ENCODE measurements at regions of chr1 and their contacts with region 1.

Region 1: DNA sequence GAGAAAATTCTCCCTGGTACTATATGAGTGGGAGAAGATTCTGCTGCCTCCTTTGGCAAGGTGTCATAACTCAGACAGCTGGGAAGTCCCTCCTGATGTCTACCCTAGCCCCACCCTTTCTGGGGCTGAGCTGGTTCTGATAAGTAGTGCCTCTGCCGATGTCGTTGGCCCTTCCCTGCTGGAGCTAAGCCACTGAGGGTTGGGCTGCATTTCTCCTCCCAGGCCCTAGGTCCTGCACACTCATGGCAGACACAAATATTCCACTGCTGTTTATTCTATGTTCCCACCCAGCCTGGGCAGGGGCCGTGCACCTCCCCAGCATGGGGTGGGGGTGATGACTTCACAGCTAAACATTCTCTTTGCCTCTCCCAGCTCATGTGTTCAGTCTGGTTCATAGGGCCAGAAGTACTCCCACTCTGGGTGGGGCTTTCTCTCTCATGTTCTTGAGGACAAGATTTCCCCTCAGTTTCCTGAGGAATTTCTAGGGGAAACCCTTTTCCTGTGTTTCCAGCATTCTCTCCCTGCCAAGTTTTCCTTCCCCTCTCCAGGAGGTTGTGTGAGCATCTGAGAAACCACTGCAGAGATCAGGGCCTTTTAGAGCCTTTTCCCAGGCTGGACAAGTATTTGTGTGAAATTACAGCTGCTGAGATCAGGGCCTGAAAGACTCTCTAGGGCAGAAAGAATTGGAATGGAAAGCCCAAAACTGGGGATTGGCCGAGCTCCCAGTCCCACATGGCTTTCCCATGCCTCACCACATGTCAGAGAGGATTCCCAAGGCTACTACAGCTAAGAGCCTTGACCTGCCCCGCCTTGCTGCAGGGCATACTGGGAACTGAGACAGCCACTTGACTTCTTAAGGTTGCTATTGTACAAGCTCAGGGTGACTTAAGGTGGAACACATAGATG is 66.2 kb downstream of the ATP2B4 start:
- DNase-seq: peak; percentile 55 to 82
- ATAC-seq: peak; percentile 85 to 88
- H3K4me3 ChIP-seq: no peak overlapping the region
- H3K27ac ChIP-seq: peak overlapping the region; percentile 73 to 77
- H3K4me1 ChIP-seq: peaks cover 32% of the 10 kb centered on the region
- CTCF ChIP-seq: no peak
- EP300 ChIP-seq: no peak
- POLR2A ChIP-seq: no peak
- RAD21 ChIP-seq: 0 out of 5 replicates have a peak, but pooled peaks of 1 of the 2 experiments have one; percentile 10

Region 2: GRCh38 chr1:203625628-203626019 is 67.2 kb before region 1 on chr1:
- CTCF ChIA-PET with region 1: interaction called, 8 read pairs
- POLR2A ChIA-PET with region 1: interaction called, 10 read pairs
- DNase-seq: peak in 1 of 2 experiments; percentile 58
- ATAC-seq: peak; percentile 11 to 30; a peak in 4 of 6 replicates
- H3K4me3 ChIP-seq: no peak overlapping the region
- H3K27ac ChIP-seq: peak overlapping the region; percentile 79 to 92
- H3K4me1 ChIP-seq: peaks cover 28% of the 10 kb centered on the region
- CTCF ChIP-seq: peak; percentile 42
- EP300 ChIP-seq: no peak
- POLR2A ChIP-seq: no peak
- RAD21 ChIP-seq: peak; percentile 64 to 71

Region 3: DNA sequence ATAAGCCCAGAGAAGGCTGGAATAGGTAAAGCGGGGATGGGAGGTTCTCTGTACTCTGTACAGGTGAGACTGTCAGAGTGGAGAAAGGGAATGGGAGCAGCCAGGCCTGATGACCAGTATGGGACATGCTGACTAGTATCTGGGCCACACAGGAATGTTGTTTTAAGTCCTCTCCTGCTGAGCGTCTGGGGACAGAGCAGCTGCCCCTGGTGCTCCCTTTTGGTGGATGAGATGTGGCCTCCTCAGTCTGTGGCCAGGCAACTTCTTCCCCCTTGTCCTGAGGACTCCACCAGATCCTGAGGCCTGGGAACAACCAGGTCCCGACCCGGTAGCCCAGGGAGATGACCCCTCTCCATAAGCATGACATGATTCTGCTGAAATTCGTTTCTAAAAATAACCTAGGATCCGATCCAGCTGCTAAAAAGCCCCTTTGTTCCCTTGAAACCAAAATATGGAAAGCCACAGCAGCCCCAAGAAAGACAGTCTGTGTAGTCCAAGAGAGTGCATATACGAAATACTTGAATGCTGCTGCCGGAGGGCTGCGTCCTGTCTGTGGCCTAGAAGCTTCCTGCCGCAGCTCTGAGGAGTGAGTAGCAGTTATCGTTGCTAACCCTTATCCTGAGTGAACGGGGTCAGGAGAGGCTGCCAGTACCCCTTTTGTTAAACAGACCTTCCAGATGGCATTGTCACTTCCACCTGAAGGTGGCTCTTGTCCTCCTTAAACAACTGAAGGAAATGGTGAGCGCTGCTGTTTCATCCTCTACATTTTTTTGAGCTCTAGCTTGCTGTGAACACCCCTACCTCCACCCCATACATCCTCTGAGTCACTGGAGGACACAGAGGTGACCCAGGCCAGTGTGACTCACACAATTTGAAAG is 19.0 kb before region 1 on chr1:
- CTCF ChIA-PET with region 1: interaction called, 16 read pairs
- POLR2A ChIA-PET with region 1: interaction called, 4 read pairs
- DNase-seq: peak; percentile 85 to 87
- ATAC-seq: peak; percentile 92 to 93
- H3K4me3 ChIP-seq: no peak overlapping the region
- H3K27ac ChIP-seq: peak overlapping the region; percentile 49 to 80
- H3K4me1 ChIP-seq: peaks cover 36% of the 10 kb centered on the region
- CTCF ChIP-seq: peak; percentile 38; the same call in 2 of the 3 replicates
- EP300 ChIP-seq: no peak
- POLR2A ChIP-seq: no peak
- RAD21 ChIP-seq: peak; percentile 52 to 55